Heart right ventricle (tissue), 16 donors: ENCODE measurements at regions of chr6 and their contacts with region 1.

Region 1: GRCh38 chr6:154249499-154250298 is 106.9 kb downstream of the IPCEF1 start:
- DNase-seq: no peak
- ATAC-seq: no peak
- H3K4me3 ChIP-seq: peak overlapping the region in 1 of 10 donors; percentile 10
- H3K27ac ChIP-seq: peak overlapping the region in 1 of 10 donors; percentile 83
- H3K4me1 ChIP-seq: peaks cover 0 to 50% (median 0%) of the 10 kb centered on the region in 9 donors
- H3K27me3 ChIP-seq: no peaks in the 10 kb centered on the region
- CTCF ChIP-seq: no peak

Region 2: DNA sequence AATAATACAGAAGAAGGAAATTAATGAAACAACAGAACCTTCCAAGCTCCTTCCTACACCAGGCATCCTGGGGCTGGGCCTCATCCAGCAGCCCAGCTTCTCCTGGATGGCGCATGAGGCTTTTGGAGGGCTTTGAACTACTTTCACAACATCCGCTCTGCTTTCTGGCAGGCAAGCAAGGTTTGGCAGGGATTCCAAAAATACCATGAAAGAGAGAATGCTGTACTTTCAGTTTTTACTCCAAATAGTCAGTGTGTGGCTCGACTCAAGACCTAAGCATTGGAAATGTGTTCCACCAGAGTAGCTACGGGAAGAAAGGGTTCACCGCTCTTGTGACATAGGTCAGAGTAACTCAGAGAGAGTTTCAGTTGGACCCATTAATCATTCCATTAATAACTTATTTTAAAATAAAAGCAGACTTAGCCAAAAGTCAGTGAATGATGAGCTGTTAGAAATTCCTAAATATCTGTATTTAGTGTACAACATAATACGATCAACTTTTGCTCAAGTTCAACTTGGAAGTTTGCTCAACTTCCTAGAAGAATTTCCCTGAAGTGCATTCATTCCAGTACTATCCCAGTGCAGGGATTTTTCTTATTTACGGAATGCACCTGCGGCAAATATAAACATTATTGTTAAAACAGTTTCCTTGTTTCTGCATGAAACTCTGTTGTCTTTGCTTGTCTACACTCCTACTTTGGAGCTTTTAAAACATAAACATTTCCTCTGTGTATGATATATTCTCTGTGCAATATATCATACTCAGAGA is 85.1 kb before region 1 on chr6:
- intact Hi-C with region 1: loop called in 1 of 10 experiments (anchors 10 kb)
- DNase-seq: no peak
- ATAC-seq: peak in 2 of 8 donors; percentile 44 to 52
- H3K4me3 ChIP-seq: no peak overlapping the region
- H3K27ac ChIP-seq: peak overlapping the region in 1 of 10 donors; percentile 52
- H3K4me1 ChIP-seq: peaks cover 0 to 68% (median 0%) of the 10 kb centered on the region in 9 donors
- H3K27me3 ChIP-seq: no peaks in the 10 kb centered on the region
- CTCF ChIP-seq: no peak

Region 3: DNA sequence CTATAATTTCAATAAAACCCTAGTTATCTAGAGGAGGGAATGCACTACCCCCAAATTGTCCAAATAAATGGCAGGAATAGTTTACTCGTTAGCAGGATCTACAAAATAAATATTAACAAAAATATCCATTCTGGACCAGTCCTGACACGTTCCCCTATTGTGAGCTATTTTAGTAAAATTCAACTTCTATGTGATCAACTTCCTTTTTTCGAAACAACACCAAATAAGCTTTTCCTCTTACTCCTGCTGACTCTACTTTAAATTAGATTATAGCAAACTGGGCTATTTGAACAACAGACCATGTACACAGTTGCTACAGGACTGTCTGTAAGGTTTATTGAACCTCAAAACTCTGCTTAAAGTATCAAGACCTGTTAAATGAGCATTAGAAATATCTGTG is 47.4 kb before region 1 on chr6:
- intact Hi-C with region 1: no loop called
- DNase-seq: no peak
- ATAC-seq: peak in 2 of 8 donors; percentile 33 to 65
- H3K4me3 ChIP-seq: no peak overlapping the region
- H3K27ac ChIP-seq: peak overlapping the region in 1 of 10 donors; percentile 28
- H3K4me1 ChIP-seq: peaks cover 0 to 31% (median 0%) of the 10 kb centered on the region in 9 donors
- H3K27me3 ChIP-seq: no peaks in the 10 kb centered on the region
- CTCF ChIP-seq: no peak

Region 4: DNA sequence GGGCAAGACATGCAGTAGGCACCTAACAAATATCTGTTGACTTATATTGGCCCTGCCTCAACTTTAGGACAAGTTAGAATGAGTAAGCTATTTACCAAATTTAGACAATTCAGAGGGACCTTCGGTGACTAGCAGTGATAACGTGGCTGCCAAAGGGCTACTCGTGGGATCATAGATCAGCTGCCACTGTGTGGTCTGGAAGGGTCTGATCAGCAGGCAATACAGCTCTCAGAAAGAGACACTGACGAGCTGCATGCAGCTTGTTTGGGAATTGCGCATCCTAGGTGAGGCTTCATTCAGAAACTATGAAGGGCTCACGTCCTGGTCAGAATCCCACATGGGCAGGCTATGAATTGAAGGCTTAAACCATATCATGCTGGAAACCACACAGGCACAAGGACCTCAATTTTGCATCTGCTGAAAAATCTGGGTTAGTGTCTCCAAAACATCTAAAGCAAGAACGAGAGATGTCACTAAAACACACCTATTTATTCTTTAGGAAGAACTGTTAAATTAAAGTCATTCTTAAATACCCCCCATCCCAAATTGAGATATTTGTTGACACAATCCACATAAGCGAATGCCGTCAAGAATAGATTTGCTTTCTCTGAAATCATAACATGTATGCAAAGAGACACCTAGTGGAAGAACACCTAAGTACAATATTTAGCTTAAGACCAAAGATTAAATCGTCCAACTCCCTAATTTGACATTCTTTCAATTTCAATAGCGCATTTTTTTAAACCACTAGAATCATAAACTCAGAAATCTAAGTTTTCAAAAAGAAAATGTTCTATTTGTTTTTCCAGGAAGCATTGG is 27.3 kb after region 1 on chr6:
- intact Hi-C with region 1: loop called in 1 of 10 experiments (anchors 2 kb)
- DNase-seq: no peak
- ATAC-seq: peak in 2 of 8 donors; percentile 35 to 39
- H3K4me3 ChIP-seq: peak overlapping the region in 3 of 10 donors; percentile 1 to 10 (median 5)
- H3K27ac ChIP-seq: no peak overlapping the region
- H3K4me1 ChIP-seq: peaks cover 0 to 13% (median 3%) of the 10 kb centered on the region in 9 donors
- H3K27me3 ChIP-seq: no peaks in the 10 kb centered on the region
- CTCF ChIP-seq: peak in 8 of 9 donors; percentile 34 to 74 (median 64)